HEK293 (cell line): ENCODE measurements at regions of chr2 and their contacts with region 1.

Region 1: DNA sequence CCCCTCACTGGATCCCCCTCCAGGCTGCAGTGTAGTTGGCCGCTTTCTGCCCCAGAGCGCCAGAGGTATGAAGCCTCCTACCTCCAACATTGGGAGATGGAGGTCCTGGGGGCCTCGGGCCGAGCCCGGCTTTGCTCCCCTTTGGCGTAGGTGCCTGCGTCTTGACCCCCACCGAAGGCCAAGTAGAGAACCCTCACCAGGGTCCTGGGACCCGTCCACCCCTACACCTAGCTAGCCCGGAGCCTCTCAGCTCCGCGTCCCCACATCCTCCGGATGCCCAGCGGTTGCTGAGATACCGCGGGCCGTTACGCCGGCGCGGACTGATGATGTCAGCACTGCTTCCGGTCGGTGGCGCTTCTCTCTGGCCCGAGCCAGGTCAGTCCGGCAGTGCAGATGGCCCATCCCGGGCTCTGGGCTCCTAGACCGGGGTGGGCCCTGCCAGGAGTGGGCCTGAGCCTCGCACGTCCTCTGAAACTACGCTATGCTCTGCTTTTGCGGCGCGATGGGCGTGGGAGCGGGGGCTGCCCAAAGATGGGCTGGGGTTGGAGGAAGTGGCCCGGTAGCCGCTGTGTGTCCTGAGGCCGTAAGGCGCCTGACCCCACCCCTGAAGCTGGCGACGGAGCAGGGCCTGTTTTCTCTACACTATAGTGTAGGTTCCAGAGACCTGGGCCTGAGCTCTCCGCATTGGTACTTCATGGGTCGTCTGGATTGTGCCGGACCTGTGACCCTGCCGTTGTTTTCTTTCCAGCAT is at the starts of genes GLB1L and STK16:
- H3K4me3 ChIP-seq: peak within 1 kb of the TSS; percentile 94
- H3K27ac ChIP-seq: peak within 1 kb of the TSS; percentile 85
- H3K4me1 ChIP-seq: peaks cover 10% of the 10 kb centered on the region
- CTCF ChIP-seq: peak; percentile 32; the same call in 1 of the 2 replicates

Region 2: DNA sequence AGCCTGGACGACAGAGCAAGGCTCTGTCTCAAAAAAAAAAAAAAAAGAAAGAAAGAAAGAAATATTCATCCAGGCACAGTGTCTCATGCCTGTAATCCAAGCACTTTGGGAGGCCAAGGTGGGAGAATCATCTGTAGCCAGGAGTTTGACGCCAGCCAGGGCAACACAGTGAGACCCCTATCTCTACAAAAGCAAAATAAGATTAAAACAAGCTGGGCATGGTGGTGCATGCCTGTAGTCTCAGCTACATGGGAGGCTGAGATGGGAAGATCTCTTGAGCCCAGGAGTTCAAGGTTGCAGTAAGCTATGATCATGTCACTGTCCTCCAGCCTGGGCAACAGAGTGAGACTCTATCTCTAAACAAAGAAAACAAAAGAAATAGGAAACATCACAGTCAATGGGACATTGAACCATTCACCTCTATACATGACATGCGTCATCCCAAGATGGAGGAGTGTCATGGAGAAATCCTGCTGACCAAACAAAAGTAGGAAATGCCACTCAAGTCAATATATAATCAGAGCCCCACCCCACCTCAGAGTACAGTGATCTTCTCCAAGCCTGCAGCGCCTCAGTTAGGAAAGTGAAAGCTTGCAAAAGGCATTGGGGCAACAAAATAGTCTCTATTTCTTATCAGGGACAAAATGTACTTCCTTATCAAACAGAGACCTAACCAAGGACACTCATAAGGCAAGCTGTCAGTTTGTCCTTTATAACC is 270.1 kb before region 1 on chr2:
- CTCF ChIA-PET with region 1: no interaction called
- POLR2A ChIA-PET with region 1: no interaction called
- H3K4me3 ChIP-seq: no peak overlapping the region
- H3K27ac ChIP-seq: no peak overlapping the region
- H3K4me1 ChIP-seq: 0 out of 2 replicates have a peak, but pooled peaks cover 2% of the 10 kb centered on the region
- CTCF ChIP-seq: no peak

Region 3: GRCh38 chr2:219087361-219087760 is 158.0 kb before region 1 on chr2:
- CTCF ChIA-PET with region 1: no interaction called
- POLR2A ChIA-PET with region 1: no interaction called
- H3K4me3 ChIP-seq: no peak overlapping the region
- H3K27ac ChIP-seq: no peak overlapping the region
- H3K4me1 ChIP-seq: no peaks in the 10 kb centered on the region
- CTCF ChIP-seq: no peak

Region 4: DNA sequence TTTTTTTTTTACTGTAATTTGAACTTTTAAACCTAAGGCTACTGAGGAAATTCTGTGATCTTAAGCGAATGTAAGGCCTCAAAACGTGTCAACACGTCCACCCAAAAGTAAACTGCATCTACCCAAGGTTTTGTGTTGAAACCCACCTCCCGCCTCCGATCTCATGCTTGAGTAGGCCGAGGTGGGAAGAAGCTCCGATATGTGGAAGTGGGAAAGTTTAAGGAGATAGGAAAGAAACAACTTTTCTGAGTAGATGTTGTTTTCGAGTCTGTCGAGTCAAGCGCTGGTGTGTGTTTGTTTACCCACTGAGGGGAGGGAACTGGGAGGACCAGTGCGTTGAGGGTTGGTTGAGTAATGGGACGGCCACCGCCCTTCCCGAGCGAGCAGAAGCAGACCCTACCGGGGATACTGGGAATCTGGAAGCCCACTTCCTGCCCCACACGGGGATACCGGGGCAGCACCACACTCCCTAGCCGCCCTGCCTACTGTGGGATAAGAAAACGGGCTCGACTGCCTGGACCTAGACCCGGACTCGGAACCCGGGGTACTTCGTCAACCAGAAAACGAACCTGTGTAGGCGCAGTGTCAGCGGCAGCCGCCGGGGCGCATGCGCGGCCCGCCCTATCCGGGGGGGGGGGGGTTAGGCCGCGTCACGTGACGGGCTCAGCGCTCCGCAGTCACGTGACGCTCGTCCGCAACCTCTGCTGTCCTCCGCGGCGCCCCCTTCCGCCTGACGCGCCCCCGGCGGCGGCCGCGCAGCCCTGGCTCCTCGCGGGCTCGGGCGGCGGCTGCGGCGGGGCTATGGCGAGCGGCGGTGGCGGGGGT is 67.6 kb before region 1 on chr2 and contains the start of gene RETREG2:
- CTCF ChIA-PET with region 1: interaction called, 3 read pairs
- POLR2A ChIA-PET with region 1: interaction called, 14 read pairs
- H3K4me3 ChIP-seq: peak within 1 kb of the TSS; percentile 78
- H3K27ac ChIP-seq: peak within 1 kb of the TSS; percentile 79
- H3K4me1 ChIP-seq: peaks cover 6% of the 10 kb centered on the region; the same call in 1 of the 2 replicates
- CTCF ChIP-seq: peak; percentile 20; the same call in 1 of the 2 replicates

Region 5: DNA sequence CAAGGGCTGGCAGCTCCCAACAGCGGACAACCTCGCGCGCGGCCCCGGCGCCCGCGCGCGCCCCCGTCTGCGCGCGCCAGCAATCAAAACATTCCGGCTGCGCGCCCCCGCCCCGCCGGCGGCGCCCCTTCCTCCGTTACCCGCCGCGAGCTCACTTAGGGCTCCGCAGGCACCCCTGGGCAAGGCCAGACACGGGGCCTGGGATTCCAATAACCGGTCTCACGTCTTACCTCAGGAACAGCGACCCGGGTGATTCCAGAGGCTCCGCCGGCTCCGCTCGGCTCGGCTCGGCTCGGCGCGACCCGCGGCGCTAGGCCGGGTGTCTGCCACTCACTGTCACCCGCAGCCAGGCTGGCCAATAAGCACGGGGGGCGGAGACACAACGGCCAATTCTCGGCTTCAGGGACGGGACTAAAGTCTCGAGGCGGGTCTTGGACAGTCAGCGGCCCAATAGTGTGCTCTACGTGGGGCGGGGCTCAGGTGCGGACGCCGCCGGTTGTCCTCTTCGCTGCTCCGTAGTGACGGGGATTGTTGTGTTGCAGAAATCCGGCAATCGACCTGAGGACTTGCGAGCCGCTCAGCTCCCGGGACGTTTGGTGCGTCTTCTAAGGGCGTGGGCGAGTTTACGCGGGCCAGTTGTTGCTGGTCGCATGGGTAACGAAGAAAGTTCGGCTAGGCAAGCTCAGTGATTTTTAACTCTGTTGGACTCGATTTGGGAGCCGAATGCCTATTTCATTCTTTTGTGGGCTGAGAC is 15.8 kb before region 1 on chr2 and contains the starts of genes ANKZF1 and ATG9A:
- CTCF ChIA-PET with region 1: interaction called, 5 read pairs
- POLR2A ChIA-PET with region 1: interaction called, 16 read pairs
- H3K4me3 ChIP-seq: peak within 1 kb of the TSS; percentile 83
- H3K27ac ChIP-seq: peak within 1 kb of the TSS; percentile 81
- H3K4me1 ChIP-seq: peaks cover 4% of the 10 kb centered on the region; the same call in 1 of the 2 replicates
- CTCF ChIP-seq: no peak

Region 6: DNA sequence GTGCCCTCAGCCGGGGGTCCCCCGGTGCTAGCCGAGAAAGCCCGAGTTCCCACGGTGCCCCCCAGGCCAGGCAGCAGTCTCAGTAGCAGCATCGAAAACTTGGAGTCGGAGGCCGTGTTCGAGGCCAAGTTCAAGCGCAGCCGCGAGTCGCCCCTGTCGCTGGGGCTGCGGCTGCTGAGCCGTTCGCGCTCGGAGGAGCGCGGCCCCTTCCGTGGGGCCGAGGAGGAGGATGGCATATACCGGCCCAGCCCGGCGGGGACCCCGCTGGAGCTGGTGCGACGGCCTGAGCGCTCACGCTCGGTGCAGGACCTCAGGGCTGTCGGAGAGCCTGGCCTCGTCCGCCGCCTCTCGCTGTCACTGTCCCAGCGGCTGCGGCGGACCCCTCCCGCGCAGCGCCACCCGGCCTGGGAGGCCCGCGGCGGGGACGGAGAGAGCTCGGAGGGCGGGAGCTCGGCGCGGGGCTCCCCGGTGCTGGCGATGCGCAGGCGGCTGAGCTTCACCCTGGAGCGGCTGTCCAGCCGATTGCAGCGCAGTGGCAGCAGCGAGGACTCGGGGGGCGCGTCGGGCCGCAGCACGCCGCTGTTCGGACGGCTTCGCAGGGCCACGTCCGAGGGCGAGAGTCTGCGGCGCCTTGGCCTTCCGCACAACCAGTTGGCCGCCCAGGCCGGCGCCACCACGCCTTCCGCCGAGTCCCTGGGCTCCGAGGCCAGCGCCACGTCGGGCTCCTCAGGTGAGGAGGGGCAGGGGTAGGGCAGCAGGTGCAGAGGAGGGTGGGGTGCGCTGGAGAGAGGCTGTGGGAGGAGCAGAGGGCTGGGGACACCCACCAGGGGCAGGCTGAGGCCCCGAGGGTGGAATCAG is 239.2 kb after region 1 on chr2:
- CTCF ChIA-PET with region 1: no interaction called
- POLR2A ChIA-PET with region 1: no interaction called
- H3K4me3 ChIP-seq: no peak overlapping the region
- H3K27ac ChIP-seq: no peak overlapping the region
- H3K4me1 ChIP-seq: no peaks in the 10 kb centered on the region
- CTCF ChIP-seq: no peak